PC-3 (cell line): ENCODE measurements at regions of chr19 and their contacts with region 1.

Region 1: GRCh38 chr19:52296773-52297600 is at the start of gene ZNF480:
- DNase-seq: peak; percentile 74
- ATAC-seq: peak; percentile 88
- H3K4me3 ChIP-seq: peak within 1 kb of the TSS; percentile 82
- H3K27ac ChIP-seq: peak within 1 kb of the TSS; percentile 61
- H3K4me1 ChIP-seq: peaks cover 5% of the 10 kb centered on the region; the same call in 1 of the 2 replicates
- H3K27me3 ChIP-seq: no peaks in the 10 kb centered on the region
- CTCF ChIP-seq: no peak
- total RNA-seq, gene ZNF480: 7.3 and 9.6 TPM in 2 replicates

Region 2: GRCh38 chr19:52258426-52258825 is 38.6 kb before region 1 on chr19:
- CTCF ChIA-PET with region 1: interaction called, 14 read pairs
- POLR2A ChIA-PET with region 1: no interaction called
- intact Hi-C with region 1: no loop called
- DNase-seq: no peak
- ATAC-seq: no peak
- H3K4me3 ChIP-seq: no peak overlapping the region
- H3K27ac ChIP-seq: no peak overlapping the region
- H3K4me1 ChIP-seq: no peaks in the 10 kb centered on the region
- H3K27me3 ChIP-seq: no peaks in the 10 kb centered on the region
- CTCF ChIP-seq: no peak

Region 3: DNA sequence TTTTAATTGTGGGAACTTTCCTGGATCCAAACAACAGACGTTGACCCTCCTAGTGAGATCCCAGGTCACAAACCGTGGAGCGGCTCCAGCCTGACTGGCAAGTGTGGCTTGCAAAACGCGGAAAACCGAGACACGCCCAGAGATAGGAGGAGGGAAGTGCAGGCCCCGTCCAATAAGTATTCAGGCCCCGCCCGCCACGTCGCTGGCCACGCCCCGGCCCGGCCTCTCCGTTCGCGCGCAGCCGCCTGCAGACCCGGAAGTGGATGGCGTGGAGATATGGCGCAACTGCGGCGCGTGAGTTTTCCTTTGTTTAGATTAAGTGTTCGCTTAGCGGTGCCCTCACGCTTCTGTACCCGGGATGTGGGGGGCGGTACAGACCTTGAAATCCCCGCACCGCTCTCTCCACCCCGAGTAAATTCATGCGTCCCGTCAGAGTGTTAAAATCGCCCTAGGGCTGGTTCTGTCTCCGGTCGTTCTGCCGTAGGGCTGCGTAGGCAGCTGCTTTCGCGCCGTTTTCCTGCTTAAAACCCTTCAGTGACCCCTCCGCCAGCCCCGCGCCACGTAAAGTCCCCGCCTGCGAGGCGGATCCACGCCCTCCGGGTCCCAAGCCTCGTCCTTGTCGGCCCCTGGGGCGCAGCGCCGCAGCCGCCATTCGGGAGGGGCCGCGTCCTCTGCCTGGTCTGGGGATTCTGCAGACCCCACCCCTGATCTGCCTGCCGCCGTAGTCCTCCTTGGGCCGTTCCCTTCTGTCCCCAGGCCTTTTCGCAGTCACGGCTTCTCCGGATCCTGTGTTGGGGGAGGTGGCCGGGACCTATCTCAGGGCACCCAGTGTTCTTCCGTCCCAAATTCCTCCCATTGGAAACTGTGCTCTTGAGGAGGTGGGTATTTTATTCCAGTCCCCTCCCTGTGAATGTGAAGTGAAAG is 27.4 kb before region 1 on chr19 and contains the start of gene ZNF766:
- CTCF ChIA-PET with region 1: no interaction called
- POLR2A ChIA-PET with region 1: no interaction called
- intact Hi-C with region 1: loop called (anchors 1 kb)
- DNase-seq: peak; percentile 95
- ATAC-seq: peak; percentile 99
- H3K4me3 ChIP-seq: peak within 1 kb of the TSS; percentile 97
- H3K27ac ChIP-seq: peak within 1 kb of the TSS; percentile 84
- H3K4me1 ChIP-seq: peaks cover 12% of the 10 kb centered on the region; the same call in 1 of the 2 replicates
- H3K27me3 ChIP-seq: no peaks in the 10 kb centered on the region
- CTCF ChIP-seq: no peak
- total RNA-seq, gene ZNF766: 9.1 and 11.7 TPM in 2 replicates

Region 4: GRCh38 chr19:52285466-52285865 is 11.5 kb before region 1 on chr19:
- CTCF ChIA-PET with region 1: no interaction called
- POLR2A ChIA-PET with region 1: no interaction called
- intact Hi-C with region 1: no loop called
- DNase-seq: no peak
- ATAC-seq: no peak
- H3K4me3 ChIP-seq: no peak overlapping the region
- H3K27ac ChIP-seq: no peak overlapping the region
- H3K4me1 ChIP-seq: no peaks in the 10 kb centered on the region
- H3K27me3 ChIP-seq: no peaks in the 10 kb centered on the region
- CTCF ChIP-seq: no peak

Region 5: DNA sequence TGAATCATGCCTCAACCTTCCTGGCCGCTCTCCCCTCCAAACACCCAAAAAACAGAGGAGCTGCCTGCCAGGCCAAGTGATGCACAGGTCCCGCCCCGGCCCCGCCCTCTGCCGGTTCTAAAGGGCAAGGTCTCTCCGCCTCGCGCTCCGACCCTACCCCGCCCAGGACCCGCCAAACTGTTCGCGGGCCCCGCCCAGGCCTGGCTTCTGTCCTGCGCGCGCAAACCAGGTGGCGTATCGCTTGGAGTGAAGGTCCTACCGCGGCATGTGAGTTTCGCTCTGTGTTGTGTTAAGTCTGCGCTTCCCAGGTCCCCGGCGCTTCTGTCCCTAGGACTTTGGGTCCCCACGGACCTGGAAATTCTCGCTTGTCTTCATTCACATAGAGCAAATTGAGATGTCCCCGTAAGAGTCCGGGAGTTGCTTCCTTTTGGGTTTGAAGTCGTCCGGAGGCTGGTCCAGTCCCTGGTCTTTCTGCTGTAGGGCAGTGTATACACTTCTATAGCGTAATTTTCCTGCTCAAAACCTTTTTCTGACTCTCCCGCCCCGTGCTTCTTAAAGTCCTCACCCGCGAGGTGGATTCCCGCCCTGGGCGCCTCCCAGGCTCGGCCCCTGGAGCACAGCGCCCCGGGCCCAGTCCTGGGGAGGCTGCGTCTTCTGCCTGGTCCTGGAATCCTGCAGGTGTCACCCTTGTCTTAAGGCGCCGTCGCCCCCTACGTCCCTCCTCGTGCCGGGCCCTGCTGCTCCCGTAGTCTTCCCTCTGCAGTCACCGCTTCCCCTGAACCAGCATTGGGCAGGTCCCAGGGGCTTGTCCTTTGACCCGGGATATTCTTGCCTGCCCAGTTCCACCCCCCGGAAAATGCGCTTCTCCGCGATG is 195.8 kb after region 1 on chr19:
- CTCF ChIA-PET with region 1: no interaction called
- POLR2A ChIA-PET with region 1: no interaction called
- intact Hi-C with region 1: no loop called
- DNase-seq: no peak
- ATAC-seq: no peak
- H3K4me3 ChIP-seq: no peak overlapping the region
- H3K27ac ChIP-seq: no peak overlapping the region
- H3K4me1 ChIP-seq: no peaks in the 10 kb centered on the region
- H3K27me3 ChIP-seq: no peaks in the 10 kb centered on the region
- CTCF ChIP-seq: no peak

Region 6: DNA sequence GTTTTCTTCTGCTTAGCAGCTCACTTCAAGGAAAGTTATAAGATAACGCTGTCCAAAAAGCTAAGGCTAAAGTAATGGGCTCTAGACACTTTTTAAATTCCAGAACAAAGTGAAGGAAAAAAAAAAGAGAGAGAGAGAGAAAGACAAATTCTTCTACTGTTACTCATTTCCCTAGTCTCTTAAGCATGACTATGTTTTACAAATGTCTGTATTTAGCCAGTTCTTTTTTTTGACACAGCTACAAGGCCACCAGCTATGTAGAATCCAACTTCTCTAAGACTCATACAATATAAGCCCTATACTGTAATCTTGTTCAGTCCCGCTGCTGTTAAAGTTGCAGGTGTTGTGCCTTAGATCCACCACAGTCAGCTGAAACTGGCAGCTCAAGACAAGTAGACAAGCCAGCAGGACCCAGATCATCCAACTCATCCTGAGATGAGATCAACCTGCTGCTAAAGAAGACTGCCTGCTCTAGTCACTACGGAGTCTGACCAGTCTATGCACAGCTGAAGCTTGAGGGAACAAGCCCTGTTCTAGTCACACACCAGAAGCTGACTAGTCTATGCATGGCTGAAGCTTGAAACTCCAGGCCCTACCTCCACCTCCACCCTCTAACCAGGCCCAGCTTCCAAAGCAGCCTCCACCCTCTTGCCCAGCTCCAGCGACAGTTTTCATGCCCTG is 351.5 kb after region 1 on chr19:
- CTCF ChIA-PET with region 1: no interaction called
- POLR2A ChIA-PET with region 1: no interaction called
- intact Hi-C with region 1: no loop called
- DNase-seq: no peak
- ATAC-seq: no peak
- H3K4me3 ChIP-seq: no peak overlapping the region
- H3K27ac ChIP-seq: no peak overlapping the region
- H3K4me1 ChIP-seq: no peaks in the 10 kb centered on the region
- H3K27me3 ChIP-seq: no peaks in the 10 kb centered on the region
- CTCF ChIP-seq: no peak